GM18951 (cell line): ENCODE measurements at regions of chr11 and their contacts with region 1.

Region 1: GRCh38 chr11:4187055-4187988 is 92.7 kb downstream of the RRM1 start:
- POLR2A ChIP-seq: no peak

Region 2: GRCh38 chr11:4496557-4497275 is 309.4 kb after region 1 on chr11:
- in situ Hi-C with region 1: loop called (anchors 10 kb)
- POLR2A ChIP-seq: no peak

Region 3: DNA sequence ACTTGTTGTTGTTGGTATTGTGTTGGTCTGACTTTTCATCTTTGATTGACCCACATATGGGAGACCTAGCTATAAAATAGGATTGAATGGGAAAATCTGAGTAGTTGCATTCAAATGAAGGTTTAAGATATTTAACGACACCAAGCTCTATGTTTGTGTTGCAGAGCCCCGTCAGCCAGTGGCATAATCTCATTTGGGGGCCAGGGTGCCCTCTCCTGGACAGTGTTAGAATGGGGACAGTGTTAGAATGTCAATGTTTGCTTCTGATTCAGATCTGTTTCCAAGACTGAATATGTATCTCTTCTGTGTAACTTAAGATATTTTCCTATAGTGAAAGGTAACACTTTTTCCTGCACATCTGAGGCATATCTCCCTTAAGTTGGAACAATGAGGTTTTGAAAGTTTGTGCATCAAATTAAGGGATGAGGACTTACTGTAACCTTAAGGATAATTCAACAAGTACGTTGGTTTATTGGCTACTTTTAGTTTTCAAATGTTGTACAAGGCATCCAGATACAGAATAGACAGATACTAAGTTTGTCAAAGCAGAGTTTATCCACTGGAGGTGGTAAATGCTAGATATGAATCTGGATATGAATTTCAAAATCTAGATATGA is 352.4 kb after region 1 on chr11:
- in situ Hi-C with region 1: loop called (anchors 10 kb)
- POLR2A ChIP-seq: no peak